Heart left ventricle (tissue), 16 donors: ENCODE measurements at regions of chr2 and their contacts with region 1.

Region 1: DNA sequence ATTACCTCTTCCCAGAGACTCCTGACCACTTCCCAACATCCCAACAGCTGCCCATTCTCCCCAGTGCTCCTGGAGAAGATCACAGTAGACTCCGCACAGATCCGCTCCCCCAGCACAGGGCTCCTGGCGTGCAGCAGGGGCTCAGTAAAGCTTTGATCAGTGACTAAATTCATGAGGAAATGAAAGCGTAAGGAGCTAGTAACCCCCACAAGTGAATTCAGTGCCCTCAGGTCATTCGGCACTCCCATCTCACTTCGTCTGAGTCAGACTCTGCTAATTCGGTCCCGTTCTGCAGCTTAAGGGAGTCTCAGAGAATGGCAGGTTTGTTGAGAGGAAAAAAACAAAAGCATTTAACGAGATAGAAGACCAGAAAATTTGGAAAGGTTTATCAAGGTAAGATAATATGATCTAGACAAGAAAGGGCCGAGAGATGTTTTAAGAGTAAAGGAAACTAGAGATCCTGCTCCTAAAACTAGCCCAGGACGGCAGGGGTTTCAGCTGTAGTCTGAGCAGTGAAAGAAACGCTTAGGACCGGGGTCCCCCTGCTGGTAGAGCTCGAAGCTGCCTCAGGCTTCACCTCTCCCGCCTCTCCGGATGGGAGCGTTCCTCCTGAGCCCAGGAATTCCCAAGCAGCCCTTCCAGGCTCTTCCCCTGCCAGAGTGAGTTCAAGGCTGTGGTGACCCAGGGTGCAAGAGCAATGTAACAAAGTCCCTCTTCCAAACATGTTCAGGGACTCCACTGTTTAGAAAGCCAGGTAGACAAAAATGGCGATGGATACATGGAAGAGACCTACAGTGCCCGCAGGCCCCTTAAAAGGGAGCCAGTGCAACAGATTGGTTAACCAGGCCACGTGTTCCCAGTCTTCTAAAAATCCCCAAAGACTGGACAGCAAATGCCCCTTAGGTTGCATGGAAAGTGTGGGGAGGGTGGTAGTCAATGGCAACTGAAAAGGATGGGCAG is 127.3 kb downstream of the DNER start:
- DNase-seq: peak; percentile 73 to 84 (median 75)
- ATAC-seq: peak; percentile 90 to 99 (median 96)
- H3K4me3 ChIP-seq: peak overlapping the region in 8 of 12 donors; percentile 21 to 48 (median 30)
- H3K27ac ChIP-seq: no peak overlapping the region
- H3K4me1 ChIP-seq: peaks cover 0 to 3% (median 0%) of the 10 kb centered on the region in 12 donors
- H3K27me3 ChIP-seq: peaks cover 0 to 5% (median 0%) of the 10 kb centered on the region in 9 donors
- CTCF ChIP-seq: peak; percentile 73 to 93 (median 87)
- POLR2A ChIP-seq: no peak

Region 2: GRCh38 chr2:227890495-227891079 is 1696.4 kb before region 1 on chr2:
- intact Hi-C with region 1: loop called in 2 of 10 experiments (anchors 5 to 10 kb)
- DNase-seq: no peak
- ATAC-seq: peak in 2 of 4 donors; percentile 66 to 79
- H3K4me3 ChIP-seq: no peak overlapping the region
- H3K27ac ChIP-seq: no peak overlapping the region
- H3K4me1 ChIP-seq: no peaks in the 10 kb centered on the region
- H3K27me3 ChIP-seq: no peaks in the 10 kb centered on the region
- CTCF ChIP-seq: peak; percentile 46 to 75 (median 68)
- POLR2A ChIP-seq: no peak

Region 3: GRCh38 chr2:228681426-228681825 is 905.6 kb before region 1 on chr2:
- intact Hi-C with region 1: loop called in 2 of 10 experiments (anchors 5 to 10 kb)
- DNase-seq: no peak
- ATAC-seq: peak in 3 of 4 donors; percentile 15 to 69 (median 44)
- H3K4me3 ChIP-seq: no peak overlapping the region
- H3K27ac ChIP-seq: no peak overlapping the region
- H3K4me1 ChIP-seq: peaks cover 0 to 5% (median 0%) of the 10 kb centered on the region in 12 donors
- H3K27me3 ChIP-seq: no peaks in the 10 kb centered on the region
- CTCF ChIP-seq: peak in 11 of 12 donors; percentile 3 to 58 (median 47)
- POLR2A ChIP-seq: no peak

Region 4: DNA sequence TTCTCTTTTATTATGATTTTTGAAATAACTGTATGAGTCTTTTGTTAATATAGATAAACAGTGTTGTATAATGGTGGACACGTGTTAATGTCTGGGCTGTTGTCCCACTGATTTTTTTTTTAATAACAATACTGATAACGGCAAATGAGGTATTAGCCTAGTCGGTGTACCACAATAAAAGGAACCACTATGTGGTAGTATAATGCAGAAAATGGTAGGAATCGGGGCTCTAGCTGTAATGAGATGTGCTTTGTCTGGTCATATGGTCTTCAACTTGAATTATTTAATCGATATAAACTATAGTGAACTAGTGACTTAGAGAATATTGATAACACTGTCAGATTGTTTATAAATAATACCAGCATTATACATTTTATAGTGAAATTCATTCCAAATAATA is 887.6 kb before region 1 on chr2:
- intact Hi-C with region 1: loop called in 4 of 10 experiments (anchors 5 to 10 kb)
- DNase-seq: no peak
- ATAC-seq: peak; percentile 37 to 81 (median 58)
- H3K4me3 ChIP-seq: no peak overlapping the region
- H3K27ac ChIP-seq: no peak overlapping the region
- H3K4me1 ChIP-seq: no peaks in the 10 kb centered on the region
- H3K27me3 ChIP-seq: no peaks in the 10 kb centered on the region
- CTCF ChIP-seq: peak in 10 of 12 donors; percentile 16 to 54 (median 38)
- POLR2A ChIP-seq: no peak

Region 5: GRCh38 chr2:229090225-229090624 is 496.8 kb before region 1 on chr2:
- intact Hi-C with region 1: no loop called
- DNase-seq: no peak
- ATAC-seq: peak in 1 of 4 donors; percentile 29
- H3K4me3 ChIP-seq: no peak overlapping the region
- H3K27ac ChIP-seq: no peak overlapping the region
- H3K4me1 ChIP-seq: peaks cover 0 to 34% (median 16%) of the 10 kb centered on the region in 12 donors
- H3K27me3 ChIP-seq: no peaks in the 10 kb centered on the region
- CTCF ChIP-seq: no peak
- POLR2A ChIP-seq: no peak

Region 6: DNA sequence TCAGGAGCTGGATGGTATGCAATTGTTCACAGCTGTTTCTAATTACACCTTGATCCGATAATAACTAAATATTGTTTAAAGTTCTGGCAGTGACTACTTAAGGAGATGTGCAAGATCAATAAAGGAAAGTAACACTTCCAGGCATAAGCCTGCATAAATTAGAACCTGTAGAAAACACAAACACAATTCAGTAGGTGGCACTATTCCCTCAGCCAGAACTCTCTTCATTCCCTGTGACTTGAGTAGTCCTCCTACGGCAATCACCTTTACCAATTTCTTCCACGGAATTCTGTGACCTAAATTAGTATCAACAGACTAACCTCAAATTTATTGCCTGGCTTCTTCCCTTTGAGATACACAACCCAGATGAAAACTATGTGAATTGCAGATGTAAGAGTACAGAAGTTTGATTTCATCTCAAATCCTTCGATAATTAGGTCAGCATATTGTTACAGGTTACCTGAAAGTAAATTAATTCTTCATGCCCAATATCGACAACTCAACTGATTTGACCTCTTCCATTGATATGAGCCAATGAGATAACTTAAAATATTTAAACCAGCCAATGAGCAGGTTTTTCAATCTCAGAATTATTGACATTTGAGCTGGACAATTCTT is 453.8 kb before region 1 on chr2:
- intact Hi-C with region 1: loop called in 5 of 10 experiments (anchors 2 to 10 kb)
- DNase-seq: no peak
- ATAC-seq: peak in 2 of 4 donors; percentile 56 to 61
- H3K4me3 ChIP-seq: no peak overlapping the region
- H3K27ac ChIP-seq: no peak overlapping the region
- H3K4me1 ChIP-seq: peaks cover 0 to 12% (median 0%) of the 10 kb centered on the region in 12 donors
- H3K27me3 ChIP-seq: no peaks in the 10 kb centered on the region
- CTCF ChIP-seq: peak; percentile 21 to 57 (median 47)
- POLR2A ChIP-seq: no peak

Region 7: GRCh38 chr2:229342376-229342775 is 244.7 kb before region 1 on chr2:
- intact Hi-C with region 1: loop called in 5 of 10 experiments (anchors 5 to 10 kb)
- DNase-seq: peak in 3 of 5 donors; percentile 21 to 69 (median 43)
- ATAC-seq: no peak
- H3K4me3 ChIP-seq: no peak overlapping the region
- H3K27ac ChIP-seq: no peak overlapping the region
- H3K4me1 ChIP-seq: peaks cover 0 to 5% (median 0%) of the 10 kb centered on the region in 12 donors
- H3K27me3 ChIP-seq: peaks cover 0 to 5% (median 0%) of the 10 kb centered on the region in 9 donors
- CTCF ChIP-seq: peak; percentile 7 to 46 (median 32)
- POLR2A ChIP-seq: no peak

Region 8: GRCh38 chr2:229431327-229431954 is 155.6 kb before region 1 on chr2:
- intact Hi-C with region 1: loop called (anchors 1 to 5 kb)
- DNase-seq: no peak
- ATAC-seq: peak in 1 of 4 donors; percentile 28
- H3K4me3 ChIP-seq: no peak overlapping the region
- H3K27ac ChIP-seq: peak overlapping the region in 1 of 12 donors; percentile 27
- H3K4me1 ChIP-seq: peaks cover 0 to 9% (median 0%) of the 10 kb centered on the region in 12 donors
- H3K27me3 ChIP-seq: no peaks in the 10 kb centered on the region
- CTCF ChIP-seq: peak; percentile 37 to 64 (median 46)
- POLR2A ChIP-seq: no peak